CD4-positive, alpha-beta memory T cell (primary cell): ENCODE measurements at regions of chr12 and their contacts with region 1.

Region 1: DNA sequence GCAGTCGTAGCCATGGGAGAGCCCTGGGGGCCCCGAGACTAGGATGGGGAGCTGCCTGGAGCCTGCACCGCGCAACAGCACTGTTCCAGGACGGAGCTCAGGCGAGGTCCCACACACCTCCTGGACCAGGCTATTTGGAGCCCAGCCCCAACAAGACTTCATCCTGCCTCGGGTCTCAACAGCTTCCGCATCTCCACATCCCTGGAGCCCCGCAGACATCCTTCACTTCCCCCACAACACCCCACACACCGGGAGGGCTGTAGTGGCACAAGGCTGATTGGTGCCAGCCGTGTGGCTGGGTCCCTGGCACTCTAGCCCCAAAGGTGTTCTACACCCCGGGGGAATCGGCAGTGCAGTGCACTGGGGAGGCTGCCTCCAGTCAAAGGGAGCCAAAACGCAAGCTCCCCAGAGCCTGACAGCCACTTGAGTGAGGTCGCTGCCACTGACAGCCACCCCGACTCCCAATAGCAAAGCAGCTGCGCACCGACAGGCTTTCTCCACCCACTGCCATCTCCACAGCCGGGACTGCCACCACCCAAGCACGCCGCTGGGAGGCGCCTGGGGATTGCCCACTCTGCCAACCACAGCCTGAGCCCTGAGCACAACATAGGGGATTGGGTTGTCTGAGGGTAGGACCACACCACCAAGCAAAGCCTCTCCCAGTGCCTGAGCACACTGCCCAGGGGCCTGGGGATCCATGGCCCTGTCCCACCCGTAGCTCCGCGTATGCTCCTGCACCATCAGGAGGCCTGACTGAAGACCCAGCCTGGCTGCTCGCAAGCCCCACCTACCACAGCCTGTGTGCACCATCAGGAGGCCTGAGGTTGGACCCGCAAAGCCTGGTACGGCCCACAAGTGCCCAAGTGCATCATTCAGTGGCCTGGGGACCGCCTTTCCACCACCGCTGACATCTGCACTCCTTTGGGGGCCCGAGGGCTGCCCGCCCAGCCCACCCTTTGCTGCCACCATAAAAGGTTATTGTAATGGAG is 13.2 kb upstream of the KLRF1 start:
- DNase-seq: peak; percentile 86 to 90 (median 89)
- H3K4me3 ChIP-seq: peak overlapping the region; percentile 54 to 57
- H3K4me3 Mint-ChIP-seq: peak overlapping the region; percentile 81 to 94 (median 86)
- H3K27ac ChIP-seq: peak overlapping the region; percentile 33
- H3K27ac Mint-ChIP-seq: peak overlapping the region in 6 of 7 donors; percentile 32 to 84 (median 68)
- H3K4me1 ChIP-seq: peaks cover 7% of the 10 kb centered on the region
- H3K4me1 Mint-ChIP-seq: peaks cover 4 to 10% (median 8%) of the 10 kb centered on the region in 4 donors
- H3K27me3 ChIP-seq: no peaks in the 10 kb centered on the region
- H3K27me3 Mint-ChIP-seq: peaks cover 12% of the 10 kb centered on the region in 2 donors

Region 2: DNA sequence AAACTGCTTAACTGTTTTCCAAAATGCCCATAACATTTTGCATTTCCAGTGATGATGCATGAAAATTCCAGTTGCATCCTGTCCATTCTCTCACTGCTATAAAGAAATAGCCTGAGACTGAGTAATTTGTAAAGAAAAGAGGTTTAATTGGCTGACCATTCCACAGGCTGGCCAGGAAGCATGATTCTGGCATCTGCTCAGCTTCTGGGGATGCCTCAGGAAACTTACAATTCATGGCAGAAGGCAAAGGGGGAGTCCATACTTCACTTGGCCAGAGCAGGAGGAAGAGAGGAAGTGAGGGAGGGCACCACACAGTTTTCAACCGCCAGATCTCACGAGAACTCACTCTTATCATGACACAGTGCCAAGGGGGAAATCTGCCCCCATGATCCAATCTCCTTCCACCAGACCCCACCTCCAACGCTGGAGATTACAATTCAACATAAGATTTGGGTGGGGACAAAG is 162.8 kb before region 1 on chr12:
- CTCF ChIA-PET with region 1: no interaction called
- POLR2A ChIA-PET with region 1: no interaction called
- intact Hi-C with region 1: no loop called
- DNase-seq: peak in 4 of 5 donors; percentile 43 to 61 (median 51)
- H3K4me3 ChIP-seq: peak overlapping the region; percentile 47 to 99
- H3K4me3 Mint-ChIP-seq: peak overlapping the region; percentile 94 to 100 (median 99)
- H3K27ac ChIP-seq: peak overlapping the region; percentile 83
- H3K27ac Mint-ChIP-seq: peak overlapping the region; percentile 85 to 99 (median 97)
- H3K4me1 ChIP-seq: peaks cover 67% of the 10 kb centered on the region
- H3K4me1 Mint-ChIP-seq: peaks cover 54 to 73% (median 61%) of the 10 kb centered on the region in 4 donors
- H3K27me3 ChIP-seq: no peaks in the 10 kb centered on the region
- H3K27me3 Mint-ChIP-seq: no peaks in the 10 kb centered on the region

Region 3: GRCh38 chr12:9669534-9669933 is 144.6 kb before region 1 on chr12 and contains the start of gene CLEC2D:
- CTCF ChIA-PET with region 1: no interaction called
- POLR2A ChIA-PET with region 1: no interaction called
- intact Hi-C with region 1: no loop called
- DNase-seq: peak; percentile 57 to 82 (median 74)
- H3K4me3 ChIP-seq: peak within 1 kb of the TSS; percentile 74 to 80
- H3K4me3 Mint-ChIP-seq: peak within 1 kb of the TSS; percentile 87 to 95 (median 94)
- H3K27ac ChIP-seq: peak within 1 kb of the TSS; percentile 79
- H3K27ac Mint-ChIP-seq: peak within 1 kb of the TSS; percentile 85 to 98 (median 96)
- H3K4me1 ChIP-seq: peaks cover 70% of the 10 kb centered on the region
- H3K4me1 Mint-ChIP-seq: peaks cover 47 to 80% (median 57%) of the 10 kb centered on the region in 4 donors
- H3K27me3 ChIP-seq: no peaks in the 10 kb centered on the region
- H3K27me3 Mint-ChIP-seq: no peaks in the 10 kb centered on the region
- total RNA-seq, gene CLEC2D: 294 to 297 TPM

Region 4: GRCh38 chr12:9827209-9827888 is 13.2 kb after region 1 on chr12 and contains the start of gene KLRF1:
- CTCF ChIA-PET with region 1: interaction called, 20 read pairs
- POLR2A ChIA-PET with region 1: no interaction called
- intact Hi-C with region 1: no loop called
- DNase-seq: no peak
- H3K4me3 ChIP-seq: no peak within 1 kb of the TSS
- H3K4me3 Mint-ChIP-seq: peak within 1 kb of the TSS in 1 of 8 donors; percentile 40
- H3K27ac ChIP-seq: no peak within 1 kb of the TSS
- H3K27ac Mint-ChIP-seq: no peak within 1 kb of the TSS
- H3K4me1 ChIP-seq: no peaks in the 10 kb centered on the region
- H3K4me1 Mint-ChIP-seq: peaks cover 0 to 1% (median 0%) of the 10 kb centered on the region in 4 donors
- H3K27me3 ChIP-seq: no peaks in the 10 kb centered on the region
- H3K27me3 Mint-ChIP-seq: peaks cover 2 to 13% of the 10 kb centered on the region in 2 donors
- total RNA-seq, gene KLRF1: 0.28 to 0.49 TPM

Region 5: GRCh38 chr12:9925708-9926393 is 111.7 kb after region 1 on chr12:
- CTCF ChIA-PET with region 1: interaction called, 116 read pairs
- POLR2A ChIA-PET with region 1: interaction called, 6 read pairs
- intact Hi-C with region 1: loop called (anchors 1 kb)
- DNase-seq: peak in 4 of 5 donors; percentile 46 to 50 (median 48)
- H3K4me3 ChIP-seq: peak overlapping the region in 1 of 2 donors; percentile 17
- H3K4me3 Mint-ChIP-seq: peak overlapping the region in 7 of 8 donors; percentile 51 to 86 (median 78)
- H3K27ac ChIP-seq: no peak overlapping the region
- H3K27ac Mint-ChIP-seq: peak overlapping the region in 1 of 7 donors; percentile 81
- H3K4me1 ChIP-seq: no peaks in the 10 kb centered on the region
- H3K4me1 Mint-ChIP-seq: peaks cover 5 to 10% (median 5%) of the 10 kb centered on the region in 4 donors
- H3K27me3 ChIP-seq: no peaks in the 10 kb centered on the region
- H3K27me3 Mint-ChIP-seq: peaks cover 1 to 6% of the 10 kb centered on the region in 2 donors

Region 6: GRCh38 chr12:10012630-10013330 is 198.7 kb after region 1 on chr12:
- CTCF ChIA-PET with region 1: interaction called, 3 read pairs
- POLR2A ChIA-PET with region 1: no interaction called
- intact Hi-C with region 1: loop called (anchors 2 kb)
- DNase-seq: no peak
- H3K4me3 ChIP-seq: no peak overlapping the region
- H3K4me3 Mint-ChIP-seq: no peak overlapping the region
- H3K27ac ChIP-seq: no peak overlapping the region
- H3K27ac Mint-ChIP-seq: no peak overlapping the region
- H3K4me1 ChIP-seq: no peaks in the 10 kb centered on the region
- H3K4me1 Mint-ChIP-seq: no peaks in the 10 kb centered on the region
- H3K27me3 ChIP-seq: peaks cover 9% of the 10 kb centered on the region
- H3K27me3 Mint-ChIP-seq: peaks cover 10 to 18% of the 10 kb centered on the region in 2 donors

Region 7: GRCh38 chr12:10190558-10191388 is 376.7 kb after region 1 on chr12:
- CTCF ChIA-PET with region 1: interaction called, 5 read pairs
- POLR2A ChIA-PET with region 1: no interaction called
- intact Hi-C with region 1: loop called (anchors 1 kb)
- DNase-seq: peak; percentile 41 to 54 (median 49)
- H3K4me3 ChIP-seq: no peak overlapping the region
- H3K4me3 Mint-ChIP-seq: no peak overlapping the region
- H3K27ac ChIP-seq: no peak overlapping the region
- H3K27ac Mint-ChIP-seq: no peak overlapping the region
- H3K4me1 ChIP-seq: no peaks in the 10 kb centered on the region
- H3K4me1 Mint-ChIP-seq: peaks cover 3 to 5% (median 4%) of the 10 kb centered on the region in 4 donors
- H3K27me3 ChIP-seq: no peaks in the 10 kb centered on the region
- H3K27me3 Mint-ChIP-seq: peaks cover 10 to 17% of the 10 kb centered on the region in 2 donors